Activated CD4-positive, alpha-beta T cell treated with anti-CD3 and anti-CD28 coated beads for 36 hours (primary cell): ENCODE measurements at regions of chr20 and their contacts with region 1.

Region 1: GRCh38 chr20:49219089-49219923 is at the start of gene DDX27:
- DNase-seq: peak; percentile 98
- ATAC-seq: peak; percentile 90
- H3K4me3 Mint-ChIP-seq: peak within 1 kb of the TSS; percentile 96
- H3K27ac Mint-ChIP-seq: peak within 1 kb of the TSS; percentile 99
- H3K4me1 Mint-ChIP-seq: peaks cover 29% of the 10 kb centered on the region
- H3K27me3 Mint-ChIP-seq: no peaks in the 10 kb centered on the region
- total RNA-seq, gene DDX27: 48.5 to 54.0 TPM

Region 2: DNA sequence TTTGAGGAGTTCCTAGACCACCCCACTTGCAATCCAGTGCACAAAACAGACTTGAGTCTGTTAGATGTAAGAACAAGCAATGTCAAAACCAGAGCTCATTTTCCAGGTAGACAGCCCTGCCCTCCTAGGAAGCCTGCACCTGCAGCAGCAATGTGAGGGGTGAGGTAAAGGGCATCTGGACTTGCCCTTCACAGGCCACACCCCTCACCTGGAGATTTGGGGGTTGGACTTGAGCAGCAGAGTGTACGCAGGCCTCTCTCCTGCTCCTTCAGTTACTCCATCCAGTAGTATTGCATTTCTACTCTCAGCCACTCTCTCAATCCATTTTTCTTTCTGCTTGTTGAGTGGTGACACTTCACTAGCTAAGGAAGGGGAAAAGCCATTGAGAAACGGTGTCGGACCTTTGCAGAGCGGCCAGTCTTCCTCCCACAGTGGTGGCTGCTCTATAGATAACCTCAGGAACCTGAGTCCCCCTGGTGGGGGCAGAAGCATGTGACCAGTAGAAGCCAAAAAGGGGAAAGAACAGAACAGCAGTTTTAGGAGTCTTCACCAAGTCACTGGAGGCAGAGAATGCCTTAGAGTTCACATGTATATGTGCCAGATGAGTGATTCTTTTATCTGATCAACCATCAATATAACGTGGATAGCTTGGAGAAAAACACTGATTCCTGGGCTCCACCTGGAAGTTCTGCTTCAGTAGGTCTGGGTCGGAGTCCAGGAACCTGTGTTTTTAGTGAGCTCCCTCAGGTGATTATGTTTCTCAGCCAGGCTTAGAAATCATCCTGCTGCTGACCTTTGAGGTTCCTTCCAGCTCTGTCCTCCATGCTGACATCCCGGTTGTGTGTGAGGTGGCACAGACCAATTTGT is 269.8 kb before region 1 on chr20:
- CTCF ChIA-PET with region 1: no interaction called
- POLR2A ChIA-PET with region 1: no interaction called
- intact Hi-C with region 1: no loop called
- DNase-seq: no peak
- ATAC-seq: no peak
- H3K4me3 Mint-ChIP-seq: no peak overlapping the region
- H3K27ac Mint-ChIP-seq: no peak overlapping the region
- H3K4me1 Mint-ChIP-seq: no peaks in the 10 kb centered on the region
- H3K27me3 Mint-ChIP-seq: no peaks in the 10 kb centered on the region

Region 3: DNA sequence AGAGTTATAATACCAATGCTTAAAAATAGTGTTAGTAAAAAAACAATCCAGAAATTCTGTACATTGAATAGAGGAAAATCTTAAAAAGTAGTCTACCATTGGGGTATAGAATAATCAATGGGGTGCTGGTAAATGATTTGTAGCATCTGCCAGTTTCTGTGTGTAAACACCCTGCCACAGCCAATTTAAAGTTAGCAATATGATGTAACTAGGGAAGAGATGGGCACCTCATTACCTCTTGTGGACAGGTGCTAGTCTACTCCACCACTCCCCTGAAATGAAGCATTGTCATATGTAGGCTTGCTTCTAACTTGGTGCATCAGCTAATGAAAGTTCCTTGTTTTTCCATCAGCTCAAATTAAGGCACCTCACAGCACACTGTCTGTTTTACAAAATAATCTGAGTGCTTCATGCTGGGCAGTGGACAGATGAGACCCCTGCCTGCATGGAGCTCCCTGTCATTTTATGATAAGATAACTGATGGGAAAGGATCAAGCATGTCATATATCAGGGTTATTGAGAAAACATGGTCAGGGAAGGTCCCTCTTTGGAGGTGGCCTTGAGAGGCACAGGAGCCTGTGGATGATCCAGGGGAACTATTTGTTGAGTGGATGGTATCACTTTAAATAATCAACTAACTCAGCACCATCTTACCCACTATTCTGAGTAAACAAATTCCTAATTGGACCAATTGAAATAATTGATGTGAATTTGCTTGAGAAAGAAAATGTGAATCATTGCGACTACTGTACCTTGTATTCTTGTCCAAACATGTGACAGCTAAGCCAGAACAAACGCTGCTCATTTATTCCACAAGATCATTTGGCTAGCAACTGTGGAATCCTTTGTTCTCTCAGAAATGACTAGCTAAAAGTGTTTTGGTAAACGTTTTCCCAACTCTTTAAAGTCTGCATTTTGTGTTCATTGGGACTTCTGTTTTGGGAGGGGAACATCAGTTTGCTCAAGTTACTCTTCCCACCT is 219.1 kb before region 1 on chr20:
- CTCF ChIA-PET with region 1: no interaction called
- POLR2A ChIA-PET with region 1: no interaction called
- intact Hi-C with region 1: no loop called
- DNase-seq: no peak
- ATAC-seq: no peak
- H3K4me3 Mint-ChIP-seq: no peak overlapping the region
- H3K27ac Mint-ChIP-seq: peak overlapping the region; percentile 13
- H3K4me1 Mint-ChIP-seq: no peaks in the 10 kb centered on the region
- H3K27me3 Mint-ChIP-seq: no peaks in the 10 kb centered on the region

Region 4: GRCh38 chr20:49132995-49133478 is 86.3 kb before region 1 on chr20:
- CTCF ChIA-PET with region 1: interaction called, 166 read pairs
- POLR2A ChIA-PET with region 1: no interaction called
- intact Hi-C with region 1: loop called (anchors 1 kb)
- DNase-seq: no peak
- ATAC-seq: peak; percentile 61
- H3K4me3 Mint-ChIP-seq: no peak overlapping the region
- H3K27ac Mint-ChIP-seq: peak overlapping the region; percentile 37
- H3K4me1 Mint-ChIP-seq: peaks cover 4% of the 10 kb centered on the region
- H3K27me3 Mint-ChIP-seq: no peaks in the 10 kb centered on the region

Region 5: DNA sequence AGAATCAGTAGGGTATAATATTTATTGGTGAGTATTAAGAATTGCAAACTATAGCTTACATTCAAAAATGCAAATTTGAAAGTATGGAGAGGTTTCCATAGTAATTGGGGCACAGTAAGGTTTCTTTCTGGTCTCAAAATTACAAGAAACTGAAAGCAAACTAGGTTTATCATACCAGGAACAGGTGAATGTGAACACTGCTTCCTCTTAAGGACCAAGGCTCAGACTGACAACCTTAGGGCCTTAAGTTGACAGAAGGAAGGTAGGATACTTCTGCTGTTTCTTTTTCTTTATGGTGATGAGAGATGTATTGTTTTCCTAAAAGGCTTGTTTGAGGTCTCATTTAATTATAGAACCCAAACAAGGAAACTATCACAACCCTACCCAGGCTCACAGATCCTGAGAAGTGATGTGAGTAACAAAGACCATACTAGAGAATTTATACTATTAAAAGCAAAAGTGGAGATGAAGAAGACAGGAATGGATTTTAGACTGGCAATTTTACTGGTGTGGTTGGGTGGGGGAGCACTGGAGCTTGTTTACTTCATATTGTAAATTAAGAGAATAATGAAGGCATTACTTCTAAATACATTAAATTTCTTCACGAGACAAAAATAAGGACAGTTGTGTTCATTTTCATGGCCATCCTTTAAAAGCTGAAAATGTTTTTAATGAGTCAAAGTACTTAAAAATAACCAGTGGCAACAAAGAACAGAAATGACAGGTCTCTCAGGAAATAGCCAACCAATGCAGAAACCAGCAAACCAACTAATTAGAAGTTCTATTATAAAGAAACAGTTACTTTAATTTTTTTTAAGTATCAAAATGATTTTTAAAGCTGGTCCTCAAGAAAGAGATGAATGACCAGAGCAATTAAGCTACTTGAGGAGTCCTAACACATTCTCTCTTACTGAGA is 52.5 kb before region 1 on chr20:
- CTCF ChIA-PET with region 1: interaction called, 28 read pairs
- POLR2A ChIA-PET with region 1: interaction called, 4 read pairs
- intact Hi-C with region 1: loop called (anchors 1 to 2 kb)
- DNase-seq: no peak
- ATAC-seq: peak; percentile 79
- H3K4me3 Mint-ChIP-seq: peak overlapping the region; percentile 37
- H3K27ac Mint-ChIP-seq: peak overlapping the region; percentile 85
- H3K4me1 Mint-ChIP-seq: peaks cover 74% of the 10 kb centered on the region
- H3K27me3 Mint-ChIP-seq: no peaks in the 10 kb centered on the region

Region 6: DNA sequence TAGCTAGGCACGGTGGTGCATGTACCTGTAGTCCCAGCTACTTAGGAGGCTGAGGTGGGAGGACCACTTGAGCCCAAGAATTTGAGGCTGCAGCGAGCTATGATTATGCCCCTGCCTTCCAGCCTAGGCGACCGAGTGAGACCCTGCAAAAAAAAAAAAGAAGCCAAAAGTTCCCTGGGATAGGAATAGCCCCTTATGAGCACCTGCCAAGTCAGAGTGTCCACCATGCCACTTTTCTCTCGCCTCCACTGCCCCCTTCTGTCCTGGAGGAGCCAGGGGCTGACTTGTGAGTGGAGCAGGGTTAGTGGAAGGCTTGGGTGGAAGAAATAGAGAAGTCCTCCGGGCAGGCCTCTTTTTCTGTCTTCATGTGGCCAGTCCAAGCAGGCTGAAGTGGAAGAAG is 12.2 kb before region 1 on chr20:
- CTCF ChIA-PET with region 1: interaction called, 21 read pairs
- POLR2A ChIA-PET with region 1: no interaction called
- intact Hi-C with region 1: no loop called
- DNase-seq: peak; percentile 55
- ATAC-seq: peak; percentile 64
- H3K4me3 Mint-ChIP-seq: no peak overlapping the region
- H3K27ac Mint-ChIP-seq: no peak overlapping the region
- H3K4me1 Mint-ChIP-seq: no peaks in the 10 kb centered on the region
- H3K27me3 Mint-ChIP-seq: no peaks in the 10 kb centered on the region